ENCODE measurements at regions of chr11 and their contacts with region 1.

Region 1: DNA sequence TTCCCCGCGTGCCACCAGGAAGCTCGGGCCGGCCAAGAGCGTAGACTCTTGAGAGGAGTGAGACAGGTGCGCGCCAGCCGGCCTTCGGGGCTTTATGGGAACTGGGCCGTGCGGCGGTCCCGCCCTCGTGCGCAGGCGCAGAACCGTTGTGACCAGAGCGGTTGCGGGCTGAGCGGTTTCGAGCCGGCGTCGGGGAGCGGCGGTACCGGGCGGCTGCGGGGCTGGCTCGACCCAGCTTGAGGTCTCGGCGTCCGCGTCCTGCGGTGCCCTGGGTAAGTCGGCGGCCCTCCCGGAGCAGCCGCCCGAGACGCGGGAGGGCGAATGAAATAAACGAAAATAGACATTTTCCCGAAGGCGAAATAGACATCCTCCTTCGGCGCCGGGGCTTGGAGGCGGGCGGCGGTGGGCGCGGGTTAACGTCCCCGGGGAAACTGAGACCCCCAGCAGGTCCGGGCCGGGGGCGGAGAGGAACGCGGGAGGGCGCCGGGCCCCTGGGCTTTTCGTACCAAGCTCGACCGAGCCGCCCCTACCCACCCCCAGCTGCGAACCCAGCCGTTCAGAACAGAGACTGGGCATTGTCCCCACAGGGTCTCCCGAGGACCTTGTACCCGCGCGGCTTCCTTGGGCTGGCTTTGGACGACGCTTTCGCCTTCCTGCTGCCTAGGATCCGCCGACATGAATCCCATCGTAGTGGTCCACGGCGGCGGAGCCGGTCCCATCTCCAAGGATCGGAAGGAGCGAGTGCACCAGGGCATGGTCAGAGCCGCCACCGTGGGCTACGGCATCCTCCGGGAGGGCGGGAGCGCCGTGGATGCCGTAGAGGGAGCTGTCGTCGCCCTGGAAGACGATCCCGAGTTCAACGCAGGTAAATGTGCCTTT is at the start of gene ASRGL1:
- DNase-seq: peak; percentile 83
- ATAC-seq: peak; percentile 93
- H3K4me3 Mint-ChIP-seq: peak within 1 kb of the TSS; percentile 84
- H3K27ac Mint-ChIP-seq: peak within 1 kb of the TSS; percentile 65
- H3K4me1 Mint-ChIP-seq: peaks cover 12% of the 10 kb centered on the region
- H3K27me3 Mint-ChIP-seq: peaks cover 19% of the 10 kb centered on the region
- total RNA-seq, gene ASRGL1: 11.5 to 12.4 TPM

Region 2: DNA sequence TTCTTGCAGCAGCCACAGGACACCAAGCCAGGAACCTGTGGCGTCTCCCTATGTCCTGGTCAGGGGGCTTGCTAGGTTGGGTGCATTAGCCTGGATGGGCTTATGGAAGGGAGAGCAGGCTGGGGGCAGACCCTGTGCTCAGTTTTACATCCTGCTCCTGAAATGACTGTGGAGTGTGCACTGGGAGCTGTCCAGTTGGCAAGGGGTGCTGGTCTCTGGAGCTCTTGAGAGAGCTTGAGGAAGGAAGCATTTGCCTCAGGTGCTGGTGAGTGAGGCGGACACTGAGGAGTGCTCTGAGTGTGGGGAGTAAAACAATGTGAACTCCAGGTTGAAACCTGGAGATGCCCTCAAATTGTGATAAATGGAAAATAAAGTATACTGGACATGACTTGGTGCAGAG is 42.0 kb before region 1 on chr11:
- CTCF ChIA-PET with region 1: no interaction called
- POLR2A ChIA-PET with region 1: no interaction called
- DNase-seq: peak; percentile 33
- ATAC-seq: no peak
- H3K4me3 Mint-ChIP-seq: no peak overlapping the region
- H3K27ac Mint-ChIP-seq: no peak overlapping the region
- H3K4me1 Mint-ChIP-seq: no peaks in the 10 kb centered on the region
- H3K27me3 Mint-ChIP-seq: peaks cover 14% of the 10 kb centered on the region

Region 3: GRCh38 chr11:62352355-62353336 is 15.1 kb after region 1 on chr11:
- CTCF ChIA-PET with region 1: interaction called, 17 read pairs
- POLR2A ChIA-PET with region 1: no interaction called
- DNase-seq: no peak
- ATAC-seq: no peak
- H3K4me3 Mint-ChIP-seq: no peak overlapping the region
- H3K27ac Mint-ChIP-seq: no peak overlapping the region
- H3K4me1 Mint-ChIP-seq: peaks cover 5% of the 10 kb centered on the region
- H3K27me3 Mint-ChIP-seq: no peaks in the 10 kb centered on the region

Region 4: GRCh38 chr11:62370743-62371440 is 33.4 kb after region 1 on chr11:
- CTCF ChIA-PET with region 1: interaction called, 50 read pairs
- POLR2A ChIA-PET with region 1: interaction called, 3 read pairs
- DNase-seq: peak; percentile 58
- ATAC-seq: peak; percentile 91
- H3K4me3 Mint-ChIP-seq: peak overlapping the region; percentile 64
- H3K27ac Mint-ChIP-seq: peak overlapping the region; percentile 86
- H3K4me1 Mint-ChIP-seq: peaks cover 31% of the 10 kb centered on the region
- H3K27me3 Mint-ChIP-seq: no peaks in the 10 kb centered on the region